ENCODE measurements at regions of chr12 and their contacts with region 1.

Region 1: DNA sequence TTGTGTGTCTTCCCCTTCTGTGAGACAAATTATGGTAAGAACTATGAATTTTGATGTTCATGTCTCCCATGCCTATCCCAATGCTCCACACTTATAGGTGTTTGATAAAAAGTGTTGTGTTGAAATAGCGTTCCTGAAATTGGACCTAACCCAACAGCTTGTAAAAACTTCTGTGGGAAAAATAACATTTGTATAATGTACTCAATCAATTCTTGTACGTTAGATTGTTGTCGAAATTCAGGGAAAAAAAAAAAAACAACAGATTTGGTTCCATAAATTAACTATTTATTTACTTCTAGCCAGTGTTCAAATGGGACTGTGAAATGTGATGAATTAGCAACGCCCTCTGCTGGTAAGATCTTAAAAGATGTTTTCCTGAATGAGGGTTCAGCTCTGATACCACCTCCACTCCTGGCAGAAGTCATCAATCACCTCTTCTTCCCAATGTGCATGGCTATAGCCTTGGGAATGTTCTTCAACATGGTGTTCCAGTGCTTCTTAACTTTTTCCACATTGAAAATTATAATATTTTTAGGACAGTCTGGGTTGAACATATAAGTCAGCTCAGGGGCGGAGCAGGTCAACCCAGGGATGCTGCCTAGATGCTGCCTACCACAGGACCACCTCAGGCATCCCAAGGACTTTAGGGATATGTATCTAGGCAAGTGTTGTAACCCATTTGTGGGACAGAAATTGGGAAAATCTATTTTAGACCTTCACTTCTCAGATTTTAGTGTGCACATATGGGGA is 170.6 kb downstream of the OTOGL start:
- DNase-seq: peak; percentile 4
- ATAC-seq: no peak
- H3K4me3 Mint-ChIP-seq: no peak overlapping the region
- H3K27ac Mint-ChIP-seq: no peak overlapping the region
- H3K4me1 Mint-ChIP-seq: no peaks in the 10 kb centered on the region
- H3K27me3 Mint-ChIP-seq: peaks cover 6% of the 10 kb centered on the region
- CTCF ChIP-seq: peak; percentile 72

Region 2: DNA sequence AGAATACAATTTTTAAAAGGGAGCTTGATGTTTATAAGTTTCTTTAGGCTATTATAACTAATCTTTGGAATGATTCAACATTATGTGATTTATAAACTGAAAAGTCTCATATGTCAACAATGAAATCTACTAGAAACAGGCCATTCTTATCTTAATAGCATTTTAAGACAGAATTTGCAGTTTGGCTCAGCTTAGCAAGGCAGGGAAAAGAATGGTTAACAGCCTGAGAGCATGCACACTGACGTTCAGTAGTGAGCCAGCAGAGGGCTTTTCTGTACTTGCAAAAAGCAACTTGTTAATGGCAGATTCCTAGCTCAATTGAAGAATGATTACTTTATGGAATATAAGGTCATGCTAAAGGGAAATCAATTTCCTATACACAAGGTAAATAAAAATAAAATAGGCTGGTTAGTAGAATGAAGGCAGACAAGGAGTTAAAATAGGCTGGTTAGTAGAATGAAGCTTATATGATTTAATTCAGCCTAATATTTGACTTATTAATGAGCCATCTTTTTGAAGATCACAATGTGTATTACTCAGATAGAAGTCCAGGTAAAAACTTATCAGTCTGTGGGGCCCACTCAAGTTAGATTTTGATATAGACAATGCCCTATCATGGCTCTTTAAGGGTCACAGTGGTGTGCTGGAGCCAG is 74.8 kb before region 1 on chr12:
- CTCF ChIA-PET with region 1: interaction called, 24 read pairs
- POLR2A ChIA-PET with region 1: no interaction called
- intact Hi-C with region 1: loop called (anchors 10 kb)
- DNase-seq: peak; percentile 25
- ATAC-seq: no peak
- H3K4me3 Mint-ChIP-seq: no peak overlapping the region
- H3K27ac Mint-ChIP-seq: no peak overlapping the region
- H3K4me1 Mint-ChIP-seq: no peaks in the 10 kb centered on the region
- H3K27me3 Mint-ChIP-seq: peaks cover 5% of the 10 kb centered on the region
- CTCF ChIP-seq: no peak